Activated CD4-positive, alpha-beta memory T cell treated with anti-CD3 and anti-CD28 coated beads for 36 hours (primary cell): ENCODE measurements at regions of chr10 and their contacts with region 1.

Region 1: DNA sequence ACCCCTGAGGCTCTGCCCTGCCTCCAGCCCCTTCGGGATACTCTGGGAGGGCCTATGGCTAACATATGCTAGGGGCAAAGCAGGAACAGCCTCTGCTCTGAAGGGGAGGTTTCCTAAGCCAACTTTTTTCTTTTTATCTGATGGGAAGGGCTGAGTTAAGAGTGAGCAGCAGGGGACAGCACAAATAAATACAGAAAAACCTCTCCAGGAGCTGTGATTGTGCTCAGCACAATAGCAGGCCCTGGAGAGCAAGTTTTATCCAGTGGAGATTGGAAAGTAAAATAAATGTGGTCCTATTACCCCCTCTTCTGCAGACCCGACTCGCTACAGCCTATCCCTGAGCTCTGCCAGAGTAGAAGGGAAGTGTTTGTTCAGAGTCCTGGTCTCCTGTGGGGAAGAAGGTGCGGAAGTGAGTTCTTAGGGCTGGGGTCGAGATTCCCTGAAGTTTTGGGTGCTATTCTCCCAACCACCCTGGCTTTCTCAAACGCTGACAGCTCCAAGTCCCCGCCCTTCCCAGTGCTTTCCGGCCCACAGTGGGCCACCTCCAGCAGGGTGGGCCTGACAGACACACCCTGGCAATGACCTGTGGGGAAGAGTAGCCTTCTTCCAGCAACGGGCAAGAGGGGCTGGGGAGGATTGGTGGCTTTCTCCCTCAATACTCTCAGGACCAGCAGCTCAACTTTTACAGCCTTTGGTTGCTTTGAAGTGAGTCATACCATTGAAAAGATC is 23.0 kb upstream of the AFAP1L2 start:
- DNase-seq: no peak
- H3K4me3 Mint-ChIP-seq: no peak overlapping the region
- H3K27ac Mint-ChIP-seq: no peak overlapping the region
- H3K4me1 Mint-ChIP-seq: no peaks in the 10 kb centered on the region
- H3K27me3 Mint-ChIP-seq: no peaks in the 10 kb centered on the region

Region 2: GRCh38 chr10:114403541-114404161 is 23.6 kb before region 1 on chr10:
- CTCF ChIA-PET with region 1: no interaction called
- POLR2A ChIA-PET with region 1: interaction called, 11 read pairs
- intact Hi-C with region 1: no loop called
- DNase-seq: no peak
- H3K4me3 Mint-ChIP-seq: peak overlapping the region; percentile 7
- H3K27ac Mint-ChIP-seq: no peak overlapping the region
- H3K4me1 Mint-ChIP-seq: peaks cover 12% of the 10 kb centered on the region
- H3K27me3 Mint-ChIP-seq: peaks cover 58% of the 10 kb centered on the region